KBM-7 (cell line): ENCODE measurements at regions of chr13 and their contacts with region 1.

Region 1: GRCh38 chr13:43905435-43906031 is 25.8 kb downstream of the LACC1 start:
- DNase-seq: peak; percentile 69

Region 2: DNA sequence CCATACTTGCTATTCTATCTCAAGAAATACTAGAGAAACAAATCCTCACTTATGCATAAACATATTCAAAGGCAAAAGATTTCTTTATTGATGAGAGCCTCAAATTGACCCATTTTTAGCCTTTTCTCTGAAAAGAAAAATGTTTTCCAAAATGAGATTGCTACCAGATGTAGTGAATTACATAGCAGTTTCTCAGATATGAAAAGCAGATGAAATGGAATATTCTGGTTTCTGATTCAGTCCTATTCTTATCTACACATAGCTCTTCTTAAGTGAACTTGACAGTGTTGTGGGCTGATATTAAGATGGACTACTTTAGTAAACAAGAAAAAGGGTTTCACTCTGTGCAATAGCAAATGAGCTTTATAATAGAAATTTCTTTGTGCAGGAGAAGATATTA is 698.7 kb before region 1 on chr13:
- in situ Hi-C with region 1: no loop called
- DNase-seq: no peak

Region 3: DNA sequence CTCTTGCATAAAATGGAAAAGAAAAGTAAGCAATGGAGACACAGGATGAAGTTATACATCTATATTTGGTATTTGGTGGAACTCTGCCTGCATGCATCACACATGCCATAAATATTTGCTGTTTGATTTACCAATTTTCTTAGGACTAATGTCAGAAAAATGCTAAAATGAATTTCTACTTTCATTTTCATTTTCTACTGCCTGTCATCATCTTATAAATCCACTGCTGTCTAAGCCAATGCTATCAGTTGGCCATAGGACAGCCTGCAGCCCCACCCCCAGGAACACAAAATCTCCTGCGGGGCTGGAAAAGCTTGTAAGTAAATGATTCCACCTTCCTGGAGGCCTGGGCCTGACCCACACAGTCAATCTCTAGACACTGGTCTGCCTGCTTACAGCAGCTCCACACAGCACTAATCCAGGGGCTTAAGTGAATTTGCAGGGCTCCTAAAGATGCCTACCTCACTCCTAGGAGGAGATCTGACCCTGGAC is 240.8 kb before region 1 on chr13:
- in situ Hi-C with region 1: no loop called
- DNase-seq: no peak

Region 4: GRCh38 chr13:44470638-44471562 is 565.4 kb after region 1 on chr13:
- in situ Hi-C with region 1: loop called (anchors 25 kb)
- DNase-seq: peak; percentile 40

Region 5: GRCh38 chr13:44523146-44524015 is 617.8 kb after region 1 on chr13:
- in situ Hi-C with region 1: no loop called
- DNase-seq: no peak